Sigmoid colon (tissue), 7 donors: ENCODE measurements at regions of chr9 and their contacts with region 1.

Region 1: GRCh38 chr9:91143642-91144041 is 218.1 kb downstream of the AUH start:
- DNase-seq: no peak
- H3K4me3 ChIP-seq: no peak overlapping the region
- H3K27ac ChIP-seq: no peak overlapping the region
- H3K4me1 ChIP-seq: peaks cover 0 to 25% (median 12%) of the 10 kb centered on the region in 4 donors
- H3K27me3 ChIP-seq: no peaks in the 10 kb centered on the region
- CTCF ChIP-seq: no peak
- EP300 ChIP-seq: no peak
- POLR2A ChIP-seq: no peak

Region 2: DNA sequence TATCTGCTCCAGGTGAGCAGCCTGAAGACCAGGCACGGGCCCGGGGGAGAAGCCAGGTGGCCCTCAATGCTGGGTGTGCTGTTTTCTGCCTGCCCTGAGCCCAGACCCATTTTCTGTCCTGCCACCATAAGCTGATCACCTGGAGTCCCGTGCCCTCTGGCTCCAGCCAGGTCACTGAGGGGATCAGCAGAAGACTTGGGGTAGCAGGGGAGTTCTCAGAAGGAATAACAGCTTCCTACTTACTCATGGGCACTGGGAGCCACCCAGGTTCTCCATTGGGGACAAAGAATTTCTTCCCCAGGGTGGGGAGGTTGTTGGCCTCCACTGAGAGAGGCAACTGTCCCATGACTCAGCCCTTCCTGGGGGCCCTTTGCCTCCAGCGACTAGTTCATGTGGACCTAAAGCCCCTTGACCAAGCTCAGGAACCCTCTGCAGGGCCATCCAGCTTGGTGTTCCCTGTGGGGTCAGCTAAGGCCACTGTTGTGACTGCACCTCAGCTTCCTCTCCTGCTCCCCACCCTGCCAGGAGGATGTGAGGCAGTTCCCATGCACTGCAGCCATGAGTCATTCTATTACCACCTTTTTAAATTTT is 43.0 kb after region 1 on chr9:
- intact Hi-C with region 1: loop called (anchors 2 kb)
- DNase-seq: no peak
- H3K4me3 ChIP-seq: no peak overlapping the region
- H3K27ac ChIP-seq: no peak overlapping the region
- H3K4me1 ChIP-seq: peaks cover 0 to 12% (median 5%) of the 10 kb centered on the region in 4 donors
- H3K27me3 ChIP-seq: no peaks in the 10 kb centered on the region
- CTCF ChIP-seq: no peak
- EP300 ChIP-seq: no peak
- POLR2A ChIP-seq: no peak

Region 3: GRCh38 chr9:91451519-91452270 is 308.1 kb after region 1 on chr9:
- intact Hi-C with region 1: no loop called
- DNase-seq: no peak
- H3K4me3 ChIP-seq: no peak overlapping the region
- H3K27ac ChIP-seq: no peak overlapping the region
- H3K4me1 ChIP-seq: no peaks in the 10 kb centered on the region
- H3K27me3 ChIP-seq: no peaks in the 10 kb centered on the region
- CTCF ChIP-seq: no peak
- EP300 ChIP-seq: no peak
- POLR2A ChIP-seq: no peak